CD8-positive, alpha-beta T cell (primary cell): ENCODE measurements at regions of chr15 and their contacts with region 1.

Region 1: DNA sequence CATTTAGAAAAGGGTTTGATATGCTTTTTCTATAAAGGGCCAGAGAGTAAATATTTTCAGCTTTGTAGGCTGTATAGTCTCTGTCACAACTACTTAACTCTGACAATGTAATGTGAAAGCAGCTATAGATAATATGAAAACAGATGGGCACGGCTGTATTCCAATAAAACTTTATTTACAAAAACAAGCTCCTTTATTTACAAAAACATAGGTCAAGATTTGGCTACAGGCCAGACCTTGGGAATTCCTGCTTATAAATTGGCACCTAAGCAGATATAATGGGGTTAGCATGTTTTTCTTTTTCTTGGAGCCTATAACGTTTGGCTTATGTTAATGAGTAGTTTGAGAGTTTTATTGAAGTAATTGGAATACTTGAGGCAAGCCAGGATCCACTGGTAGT is 119.4 kb upstream of the CGNL1 start:
- DNase-seq: no peak
- ATAC-seq: no peak
- H3K4me3 ChIP-seq: no peak overlapping the region
- H3K4me3 Mint-ChIP-seq: no peak overlapping the region
- H3K27ac ChIP-seq: no peak overlapping the region
- H3K27ac Mint-ChIP-seq: no peak overlapping the region
- H3K4me1 ChIP-seq: no peaks in the 10 kb centered on the region
- H3K4me1 Mint-ChIP-seq: no peaks in the 10 kb centered on the region
- H3K27me3 ChIP-seq: no peaks in the 10 kb centered on the region
- H3K27me3 Mint-ChIP-seq: no peaks in the 10 kb centered on the region
- CTCF ChIP-seq: no peak

Region 2: DNA sequence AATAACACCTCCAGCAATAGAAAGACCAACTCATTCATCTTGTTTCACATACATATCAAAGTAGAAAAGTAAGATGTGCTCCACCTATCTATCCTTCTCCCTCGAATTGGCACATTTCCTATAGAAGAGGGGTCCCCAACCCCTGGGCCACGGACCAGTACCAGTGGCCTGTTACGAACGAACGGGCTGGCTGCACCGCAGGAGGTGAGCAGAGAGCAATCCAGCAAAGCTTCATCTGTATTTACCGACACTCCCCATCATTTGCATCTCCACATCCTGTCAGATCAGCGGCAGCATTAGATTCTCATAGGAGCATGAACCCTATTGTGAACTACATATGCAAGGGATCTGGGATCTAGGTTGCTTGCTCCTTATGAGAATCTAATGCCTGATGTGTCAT is 24.4 kb after region 1 on chr15:
- CTCF ChIA-PET with region 1: no interaction called
- POLR2A ChIA-PET with region 1: no interaction called
- intact Hi-C with region 1: loop called in 1 of 2 experiments (anchors 2 kb)
- DNase-seq: no peak
- ATAC-seq: no peak
- H3K4me3 ChIP-seq: no peak overlapping the region
- H3K4me3 Mint-ChIP-seq: no peak overlapping the region
- H3K27ac ChIP-seq: no peak overlapping the region
- H3K27ac Mint-ChIP-seq: no peak overlapping the region
- H3K4me1 ChIP-seq: no peaks in the 10 kb centered on the region
- H3K4me1 Mint-ChIP-seq: peaks cover 4% of the 10 kb centered on the region
- H3K27me3 ChIP-seq: no peaks in the 10 kb centered on the region
- H3K27me3 Mint-ChIP-seq: no peaks in the 10 kb centered on the region
- CTCF ChIP-seq: no peak